Common myeloid progenitor, CD34-positive (primary cell): ENCODE measurements at regions of chr17 and their contacts with region 1.

Region 1: GRCh38 chr17:21239680-21240368 is 13.4 kb downstream of the NATD1 start:
- DNase-seq: peak; percentile 23 to 42 (median 39)
- H3K4me3 ChIP-seq: no peak overlapping the region
- H3K27ac ChIP-seq: no peak overlapping the region
- H3K4me1 ChIP-seq: no peaks in the 10 kb centered on the region
- H3K27me3 ChIP-seq: no peaks in the 10 kb centered on the region

Region 2: GRCh38 chr17:21249920-21250703 is 10.3 kb after region 1 on chr17:
- CTCF ChIA-PET with region 1: interaction called, 16 read pairs
- POLR2A ChIA-PET with region 1: interaction called, 3 read pairs
- DNase-seq: no peak
- H3K4me3 ChIP-seq: no peak overlapping the region
- H3K27ac ChIP-seq: no peak overlapping the region
- H3K4me1 ChIP-seq: peaks cover 5 to 19% (median 14%) of the 10 kb centered on the region in 4 experiments
- H3K27me3 ChIP-seq: no peaks in the 10 kb centered on the region